Transverse colon (tissue), 4 donors: ENCODE measurements at regions of chr3 and their contacts with region 1.

Region 1: GRCh38 chr3:64685800-64686445 is 1.9 kb downstream of the ADAMTS9 start:
- DNase-seq: peak; percentile 89
- H3K4me3 ChIP-seq: peak overlapping the region; percentile 51 to 66 (median 59)
- H3K27ac ChIP-seq: peak overlapping the region; percentile 90 to 96 (median 92)
- H3K4me1 ChIP-seq: peaks cover 0 to 18% (median 9%) of the 10 kb centered on the region in 4 donors
- H3K27me3 ChIP-seq: peaks cover 23% of the 10 kb centered on the region
- CTCF ChIP-seq: peak in 4 of 5 experiments; percentile 7 to 32 (median 13)
- EP300 ChIP-seq: peak; percentile 64
- POLR2A ChIP-seq: peak; percentile 78

Region 2: GRCh38 chr3:64739971-64740631 is 54.2 kb after region 1 on chr3:
- in situ Hi-C with region 1: no loop called
- intact Hi-C with region 1: loop called (anchors 2 kb)
- DNase-seq: peak; percentile 13
- H3K4me3 ChIP-seq: no peak overlapping the region
- H3K27ac ChIP-seq: peak overlapping the region; percentile 42 to 65 (median 54)
- H3K4me1 ChIP-seq: peaks cover 3 to 16% (median 9%) of the 10 kb centered on the region in 4 donors
- H3K27me3 ChIP-seq: no peaks in the 10 kb centered on the region
- CTCF ChIP-seq: no peak
- EP300 ChIP-seq: no peak
- POLR2A ChIP-seq: no peak

Region 3: DNA sequence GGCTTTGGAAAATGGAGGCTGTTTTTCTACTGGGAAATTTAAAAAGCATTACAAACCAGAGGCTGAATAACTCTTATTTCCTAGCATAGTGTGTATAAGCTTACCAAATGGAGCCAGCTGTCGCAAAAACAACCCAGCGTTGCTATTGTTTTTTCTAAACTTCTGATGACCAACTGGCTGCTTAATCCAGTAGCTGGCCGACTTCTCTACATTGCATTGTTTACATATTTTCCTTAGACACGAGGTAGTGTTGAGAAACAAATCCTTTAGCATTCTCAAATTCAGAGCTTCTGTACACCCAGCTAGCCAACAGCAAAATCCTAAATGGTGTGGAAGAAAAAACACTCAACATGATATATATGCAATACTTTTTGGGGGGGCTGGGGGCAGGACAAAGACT is 162.9 kb after region 1 on chr3:
- in situ Hi-C with region 1: no loop called
- intact Hi-C with region 1: loop called (anchors 5 kb)
- DNase-seq: peak; percentile 9
- H3K4me3 ChIP-seq: no peak overlapping the region
- H3K27ac ChIP-seq: peak overlapping the region in 2 of 4 donors; percentile 12 to 39
- H3K4me1 ChIP-seq: no peaks in the 10 kb centered on the region
- H3K27me3 ChIP-seq: no peaks in the 10 kb centered on the region
- CTCF ChIP-seq: no peak
- EP300 ChIP-seq: no peak
- POLR2A ChIP-seq: no peak

Region 4: DNA sequence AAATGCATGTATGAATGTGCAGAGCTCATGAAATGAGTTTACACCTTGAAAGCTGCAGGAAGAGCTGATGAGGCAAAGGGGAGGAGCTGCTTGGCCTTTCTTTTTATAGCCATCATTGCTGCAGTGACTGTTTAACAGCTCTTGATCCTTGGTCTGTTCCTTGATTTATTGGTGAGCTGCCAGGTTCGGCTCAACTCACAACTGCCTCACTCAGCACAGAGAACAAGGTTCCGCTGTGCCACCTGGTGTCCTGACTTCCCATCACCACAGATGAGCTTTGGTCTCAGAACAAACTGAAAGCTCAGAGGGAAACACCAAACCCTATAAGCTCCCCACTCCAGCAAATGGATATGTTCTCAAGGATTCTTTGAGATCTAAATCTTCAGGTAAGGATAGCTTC is 726.7 kb after region 1 on chr3:
- in situ Hi-C with region 1: loop called in 1 of 4 experiments (anchors 25 kb)
- intact Hi-C with region 1: no loop called
- DNase-seq: peak; percentile 87
- H3K4me3 ChIP-seq: no peak overlapping the region
- H3K27ac ChIP-seq: peak overlapping the region; percentile 24 to 69 (median 54)
- H3K4me1 ChIP-seq: peaks cover 5 to 26% (median 13%) of the 10 kb centered on the region in 4 donors
- H3K27me3 ChIP-seq: no peaks in the 10 kb centered on the region
- CTCF ChIP-seq: peak; percentile 29 to 79 (median 46)
- EP300 ChIP-seq: peak; percentile 16
- POLR2A ChIP-seq: no peak